Natural killer cell (primary cell): ENCODE measurements at regions of chr5 and their contacts with region 1.

Region 1: DNA sequence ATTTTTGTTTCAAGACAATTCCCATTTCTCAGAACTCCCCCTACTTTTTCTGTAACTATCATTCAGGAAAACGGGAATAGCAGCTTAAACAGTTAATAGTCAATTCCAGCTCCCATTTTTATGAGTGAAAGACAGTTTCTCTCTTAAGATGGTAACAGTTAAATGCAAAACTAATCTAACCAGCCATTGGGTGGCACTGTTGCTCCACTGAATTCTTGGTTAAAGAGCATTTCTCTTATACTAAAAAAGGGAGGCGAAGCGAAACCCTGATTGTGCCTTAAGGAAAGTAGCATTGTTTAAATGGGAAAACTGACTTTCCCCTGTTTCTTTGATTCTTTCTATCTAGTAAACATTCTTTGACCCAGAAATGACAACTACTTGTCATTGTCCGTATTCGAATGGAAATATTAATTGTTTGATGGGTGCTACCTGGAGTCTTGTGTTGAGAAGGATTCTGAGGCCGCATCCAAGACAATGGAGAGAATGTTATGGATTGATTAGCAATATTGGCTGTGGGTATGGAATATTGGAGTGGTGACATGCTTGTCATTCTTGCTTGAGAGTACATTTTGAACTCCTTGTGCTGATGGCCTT is 507.8 kb downstream of the MAT2B start:
- DNase-seq: peak; percentile 25 to 33
- ATAC-seq: peak in 2 of 3 donors; percentile 55 to 60
- H3K4me3 ChIP-seq: no peak overlapping the region
- H3K4me3 Mint-ChIP-seq: no peak overlapping the region
- H3K27ac ChIP-seq: no peak overlapping the region
- H3K27ac Mint-ChIP-seq: no peak overlapping the region
- H3K4me1 ChIP-seq: no peaks in the 10 kb centered on the region
- H3K4me1 Mint-ChIP-seq: no peaks in the 10 kb centered on the region
- H3K27me3 ChIP-seq: no peaks in the 10 kb centered on the region
- H3K27me3 Mint-ChIP-seq: no peaks in the 10 kb centered on the region
- CTCF ChIP-seq: peak; percentile 74

Region 2: GRCh38 chr5:163695830-163696578 is 317.2 kb before region 1 on chr5:
- intact Hi-C with region 1: loop called (anchors 2 kb)
- DNase-seq: peak in 1 of 2 donors; percentile 24
- ATAC-seq: peak; percentile 74 to 95 (median 89)
- H3K4me3 ChIP-seq: no peak overlapping the region
- H3K4me3 Mint-ChIP-seq: no peak overlapping the region
- H3K27ac ChIP-seq: no peak overlapping the region
- H3K27ac Mint-ChIP-seq: no peak overlapping the region
- H3K4me1 ChIP-seq: no peaks in the 10 kb centered on the region
- H3K4me1 Mint-ChIP-seq: peaks cover 5 to 7% of the 10 kb centered on the region in 2 donors
- H3K27me3 ChIP-seq: no peaks in the 10 kb centered on the region
- H3K27me3 Mint-ChIP-seq: no peaks in the 10 kb centered on the region
- CTCF ChIP-seq: peak; percentile 79

Region 3: GRCh38 chr5:165209086-165209727 is 1196.0 kb after region 1 on chr5:
- intact Hi-C with region 1: loop called (anchors 10 kb)
- DNase-seq: peak in 1 of 2 donors; percentile 7
- ATAC-seq: no peak
- H3K4me3 ChIP-seq: no peak overlapping the region
- H3K4me3 Mint-ChIP-seq: no peak overlapping the region
- H3K27ac ChIP-seq: no peak overlapping the region
- H3K27ac Mint-ChIP-seq: no peak overlapping the region
- H3K4me1 ChIP-seq: no peaks in the 10 kb centered on the region
- H3K4me1 Mint-ChIP-seq: no peaks in the 10 kb centered on the region
- H3K27me3 ChIP-seq: no peaks in the 10 kb centered on the region
- H3K27me3 Mint-ChIP-seq: no peaks in the 10 kb centered on the region
- CTCF ChIP-seq: peak; percentile 29